ENCODE measurements at regions of chr7 and their contacts with region 1.

Region 1: GRCh38 chr7:70678621-70679251 is 453.2 kb upstream of the GALNT17 start:
- DNase-seq: peak; percentile 35
- ATAC-seq: peak; percentile 25
- H3K4me3 Mint-ChIP-seq: no peak overlapping the region
- H3K27ac Mint-ChIP-seq: peak overlapping the region; percentile 20
- H3K4me1 Mint-ChIP-seq: peaks cover 40% of the 10 kb centered on the region
- H3K27me3 Mint-ChIP-seq: peaks cover 15% of the 10 kb centered on the region

Region 2: DNA sequence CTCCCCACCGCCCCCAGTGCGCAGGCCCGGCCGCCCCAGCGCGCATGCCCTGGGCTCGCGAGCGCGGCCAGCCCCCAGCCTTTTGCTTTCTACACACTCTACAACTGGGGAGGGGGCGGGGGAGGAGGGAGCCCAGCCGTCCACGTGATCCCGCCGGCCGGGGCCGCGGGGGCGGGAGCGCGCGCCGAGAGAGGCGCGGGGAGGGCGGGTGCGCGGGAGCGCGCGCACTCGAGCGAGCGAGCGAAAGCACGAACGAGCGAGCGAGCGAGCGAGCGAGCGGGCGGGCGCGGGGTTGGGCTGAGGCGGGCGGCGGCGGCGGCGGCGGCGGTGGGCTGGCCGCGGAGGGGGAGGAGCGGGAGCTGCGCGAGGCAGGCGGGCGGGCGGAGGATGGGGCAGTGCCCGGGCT is 1080.7 kb before region 1 on chr7 and contains the start of gene AUTS2:
- CTCF ChIA-PET with region 1: no interaction called
- POLR2A ChIA-PET with region 1: no interaction called
- intact Hi-C with region 1: loop called in 1 of 2 experiments (anchors 5 kb)
- DNase-seq: peak; percentile 78
- ATAC-seq: peak; percentile 76
- H3K4me3 Mint-ChIP-seq: peak within 1 kb of the TSS; percentile 78
- H3K27ac Mint-ChIP-seq: no peak within 1 kb of the TSS
- H3K4me1 Mint-ChIP-seq: peaks cover 10% of the 10 kb centered on the region
- H3K27me3 Mint-ChIP-seq: peaks cover 30% of the 10 kb centered on the region
- total RNA-seq, gene AUTS2: 2.4 to 3.0 TPM

Region 3: GRCh38 chr7:70215491-70215890 is 463.2 kb before region 1 on chr7:
- CTCF ChIA-PET with region 1: no interaction called
- POLR2A ChIA-PET with region 1: no interaction called
- intact Hi-C with region 1: no loop called
- DNase-seq: no peak
- ATAC-seq: no peak
- H3K4me3 Mint-ChIP-seq: no peak overlapping the region
- H3K27ac Mint-ChIP-seq: peak overlapping the region; percentile 8
- H3K4me1 Mint-ChIP-seq: peaks cover 13% of the 10 kb centered on the region
- H3K27me3 Mint-ChIP-seq: no peaks in the 10 kb centered on the region